A549 (cell line): ENCODE measurements at regions of chr20 and their contacts with region 1.

Region 1: GRCh38 chr20:59032023-59032712 is at the start of gene ATP5F1E:
- DNase-seq: peak; percentile 86 to 94
- ATAC-seq: peak; percentile 98 to 99
- H3K4me3 ChIP-seq: peak within 1 kb of the TSS; percentile 70
- H3K27ac ChIP-seq: peak within 1 kb of the TSS; percentile 93 to 99
- H3K4me1 ChIP-seq: peaks cover 37% of the 10 kb centered on the region
- CTCF ChIP-seq: no peak
- EP300 ChIP-seq: no peak
- POLR2A ChIP-seq: peak; percentile 90
- RAD21 ChIP-seq: no peak
- polyA plus RNA-seq, gene ATP5F1E: 69.1 and 84.9 TPM in 2 replicates

Region 2: DNA sequence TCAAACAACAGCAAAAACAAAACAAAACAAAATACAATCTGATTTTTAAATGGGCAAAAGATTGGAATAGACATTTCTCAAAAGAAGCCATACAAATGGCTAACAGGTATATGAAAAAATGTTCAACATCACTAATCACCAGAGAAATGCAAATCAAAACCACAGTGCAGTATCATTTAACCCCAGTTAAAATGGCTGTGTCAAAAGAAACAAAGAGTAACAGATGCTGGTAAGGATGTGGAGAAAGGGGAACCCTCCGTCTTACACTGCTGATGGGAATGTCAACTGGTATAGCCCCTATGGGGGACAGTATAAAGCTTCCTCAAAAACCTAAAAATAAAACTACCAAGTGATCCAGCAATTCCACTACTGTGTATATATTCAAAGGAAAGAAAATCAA is 62.0 kb before region 1 on chr20:
- CTCF ChIA-PET with region 1: no interaction called
- POLR2A ChIA-PET with region 1: no interaction called
- DNase-seq: no peak
- ATAC-seq: no peak
- H3K4me3 ChIP-seq: no peak overlapping the region
- H3K27ac ChIP-seq: no peak overlapping the region
- H3K4me1 ChIP-seq: no peaks in the 10 kb centered on the region
- CTCF ChIP-seq: no peak
- EP300 ChIP-seq: no peak
- POLR2A ChIP-seq: no peak
- RAD21 ChIP-seq: no peak

Region 3: GRCh38 chr20:58980700-58981627 is 51.2 kb before region 1 on chr20 and contains the start of gene NELFCD:
- CTCF ChIA-PET with region 1: no interaction called
- POLR2A ChIA-PET with region 1: interaction called, 35 read pairs
- DNase-seq: peak; percentile 90 to 95
- ATAC-seq: peak; percentile 92 to 95
- H3K4me3 ChIP-seq: peak within 1 kb of the TSS; percentile 71
- H3K27ac ChIP-seq: peak within 1 kb of the TSS; percentile 97
- H3K4me1 ChIP-seq: peaks cover 6% of the 10 kb centered on the region; the same call in 1 of the 3 replicates
- CTCF ChIP-seq: no peak
- EP300 ChIP-seq: no peak
- POLR2A ChIP-seq: peak; percentile 64
- RAD21 ChIP-seq: no peak
- polyA plus RNA-seq, gene NELFCD: 69.6 and 74.0 TPM in 2 replicates

Region 4: GRCh38 chr20:59042796-59043660 is 10.9 kb after region 1 on chr20:
- CTCF ChIA-PET with region 1: interaction called, 4 read pairs
- POLR2A ChIA-PET with region 1: interaction called, 34 read pairs
- DNase-seq: peak; percentile 85 to 93
- ATAC-seq: peak; percentile 90 to 98
- H3K4me3 ChIP-seq: peak overlapping the region; percentile 86
- H3K27ac ChIP-seq: peak overlapping the region; percentile 93 to 94
- H3K4me1 ChIP-seq: peaks cover 42% of the 10 kb centered on the region
- CTCF ChIP-seq: no peak
- EP300 ChIP-seq: no peak
- POLR2A ChIP-seq: peak; percentile 63
- RAD21 ChIP-seq: no peak